ENCODE measurements at regions of chr14 and their contacts with region 1.

Region 1: DNA sequence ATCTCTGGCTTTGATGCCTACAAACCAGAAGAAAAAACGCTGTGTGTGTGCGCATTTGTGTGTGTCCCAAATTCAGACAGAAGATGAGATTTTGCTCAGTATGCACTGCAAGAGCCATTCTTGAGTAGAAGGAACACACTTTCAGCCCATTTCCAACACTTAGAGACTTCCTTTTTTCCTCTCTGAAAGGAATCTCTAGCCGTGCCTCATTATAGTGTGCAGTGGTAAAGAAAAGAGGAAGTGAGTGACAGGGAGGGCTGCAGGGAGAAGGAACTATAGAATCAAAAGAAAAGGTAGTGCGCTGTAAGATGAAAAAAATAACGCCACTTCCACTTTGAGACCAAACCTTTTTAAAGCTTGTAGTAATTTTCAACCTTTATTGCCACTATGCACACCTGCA is 1400.9 kb upstream of the FLRT2 start:
- DNase-seq: peak; percentile 31
- H3K4me3 ChIP-seq: no peak overlapping the region
- H3K27ac ChIP-seq: no peak overlapping the region
- H3K4me1 ChIP-seq: peaks cover 21% of the 10 kb centered on the region
- H3K27me3 ChIP-seq: no peaks in the 10 kb centered on the region
- CTCF ChIP-seq: no peak
- POLR2A ChIP-seq: no peak

Region 2: GRCh38 chr14:84017495-84017894 is 111.5 kb before region 1 on chr14:
- CTCF ChIA-PET with region 1: no interaction called
- POLR2A ChIA-PET with region 1: no interaction called
- dilution Hi-C with region 1: no loop called
- intact Hi-C with region 1: no loop called
- DNase-seq: no peak
- H3K4me3 ChIP-seq: no peak overlapping the region
- H3K27ac ChIP-seq: no peak overlapping the region
- H3K4me1 ChIP-seq: peaks cover 4% of the 10 kb centered on the region
- H3K27me3 ChIP-seq: no peaks in the 10 kb centered on the region
- CTCF ChIP-seq: no peak
- POLR2A ChIP-seq: no peak

Region 3: DNA sequence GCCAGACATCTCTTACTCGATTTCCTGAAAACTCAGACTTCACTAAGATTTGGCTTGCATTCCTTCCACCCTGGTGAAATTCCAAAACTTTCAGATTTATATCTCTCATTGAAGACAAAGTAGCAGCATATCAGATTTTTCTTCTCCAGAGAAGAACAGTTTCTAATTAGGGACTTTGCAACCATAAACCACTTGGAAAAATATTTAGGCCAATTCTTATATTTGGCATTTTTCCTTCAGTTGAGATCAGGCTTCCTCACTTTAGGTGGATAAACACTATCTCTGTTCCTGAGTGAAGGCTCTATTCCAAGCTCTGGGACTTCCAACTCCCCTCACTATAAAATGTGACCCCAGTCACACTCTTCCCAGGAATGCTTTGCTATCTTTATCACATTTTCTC is 33.3 kb before region 1 on chr14:
- CTCF ChIA-PET with region 1: no interaction called
- POLR2A ChIA-PET with region 1: no interaction called
- dilution Hi-C with region 1: no loop called
- intact Hi-C with region 1: no loop called
- DNase-seq: peak; percentile 57
- H3K4me3 ChIP-seq: no peak overlapping the region
- H3K27ac ChIP-seq: no peak overlapping the region
- H3K4me1 ChIP-seq: peaks cover 6% of the 10 kb centered on the region
- H3K27me3 ChIP-seq: no peaks in the 10 kb centered on the region
- CTCF ChIP-seq: no peak
- POLR2A ChIP-seq: no peak

Region 4: GRCh38 chr14:84144166-84144565 is 15.2 kb after region 1 on chr14:
- CTCF ChIA-PET with region 1: no interaction called
- POLR2A ChIA-PET with region 1: no interaction called
- dilution Hi-C with region 1: no loop called
- intact Hi-C with region 1: loop called (anchors 1 kb)
- DNase-seq: peak; percentile 58
- H3K4me3 ChIP-seq: no peak overlapping the region
- H3K27ac ChIP-seq: no peak overlapping the region
- H3K4me1 ChIP-seq: peaks cover 9% of the 10 kb centered on the region
- H3K27me3 ChIP-seq: no peaks in the 10 kb centered on the region
- CTCF ChIP-seq: no peak
- POLR2A ChIP-seq: no peak

Region 5: GRCh38 chr14:84181072-84181471 is 52.1 kb after region 1 on chr14:
- CTCF ChIA-PET with region 1: no interaction called
- POLR2A ChIA-PET with region 1: no interaction called
- dilution Hi-C with region 1: no loop called
- intact Hi-C with region 1: no loop called
- DNase-seq: no peak
- H3K4me3 ChIP-seq: no peak overlapping the region
- H3K27ac ChIP-seq: no peak overlapping the region
- H3K4me1 ChIP-seq: no peaks in the 10 kb centered on the region
- H3K27me3 ChIP-seq: no peaks in the 10 kb centered on the region
- CTCF ChIP-seq: no peak
- POLR2A ChIP-seq: no peak